Activated CD4-positive, alpha-beta memory T cell treated with anti-CD3 and anti-CD28 coated beads for 36 hours (primary cell): ENCODE measurements at regions of chr6 and their contacts with region 1.

Region 1: GRCh38 chr6:90008908-90009501 is 114.7 kb downstream of the GJA10 start:
- DNase-seq: peak; percentile 54
- H3K4me3 Mint-ChIP-seq: peak overlapping the region; percentile 12
- H3K27ac Mint-ChIP-seq: peak overlapping the region; percentile 94
- H3K4me1 Mint-ChIP-seq: peaks cover 48% of the 10 kb centered on the region
- H3K27me3 Mint-ChIP-seq: no peaks in the 10 kb centered on the region

Region 2: GRCh38 chr6:89952686-89953085 is 56.3 kb before region 1 on chr6:
- CTCF ChIA-PET with region 1: no interaction called
- POLR2A ChIA-PET with region 1: interaction called, 3 read pairs
- intact Hi-C with region 1: loop called (anchors 1 kb)
- DNase-seq: peak; percentile 72
- H3K4me3 Mint-ChIP-seq: peak overlapping the region; percentile 8
- H3K27ac Mint-ChIP-seq: peak overlapping the region; percentile 69
- H3K4me1 Mint-ChIP-seq: peaks cover 68% of the 10 kb centered on the region
- H3K27me3 Mint-ChIP-seq: no peaks in the 10 kb centered on the region

Region 3: GRCh38 chr6:89985751-89986493 is 23.1 kb before region 1 on chr6:
- CTCF ChIA-PET with region 1: interaction called, 3 read pairs
- POLR2A ChIA-PET with region 1: no interaction called
- intact Hi-C with region 1: loop called (anchors 2 kb)
- DNase-seq: no peak
- H3K4me3 Mint-ChIP-seq: no peak overlapping the region
- H3K27ac Mint-ChIP-seq: peak overlapping the region; percentile 29
- H3K4me1 Mint-ChIP-seq: peaks cover 70% of the 10 kb centered on the region
- H3K27me3 Mint-ChIP-seq: no peaks in the 10 kb centered on the region

Region 4: DNA sequence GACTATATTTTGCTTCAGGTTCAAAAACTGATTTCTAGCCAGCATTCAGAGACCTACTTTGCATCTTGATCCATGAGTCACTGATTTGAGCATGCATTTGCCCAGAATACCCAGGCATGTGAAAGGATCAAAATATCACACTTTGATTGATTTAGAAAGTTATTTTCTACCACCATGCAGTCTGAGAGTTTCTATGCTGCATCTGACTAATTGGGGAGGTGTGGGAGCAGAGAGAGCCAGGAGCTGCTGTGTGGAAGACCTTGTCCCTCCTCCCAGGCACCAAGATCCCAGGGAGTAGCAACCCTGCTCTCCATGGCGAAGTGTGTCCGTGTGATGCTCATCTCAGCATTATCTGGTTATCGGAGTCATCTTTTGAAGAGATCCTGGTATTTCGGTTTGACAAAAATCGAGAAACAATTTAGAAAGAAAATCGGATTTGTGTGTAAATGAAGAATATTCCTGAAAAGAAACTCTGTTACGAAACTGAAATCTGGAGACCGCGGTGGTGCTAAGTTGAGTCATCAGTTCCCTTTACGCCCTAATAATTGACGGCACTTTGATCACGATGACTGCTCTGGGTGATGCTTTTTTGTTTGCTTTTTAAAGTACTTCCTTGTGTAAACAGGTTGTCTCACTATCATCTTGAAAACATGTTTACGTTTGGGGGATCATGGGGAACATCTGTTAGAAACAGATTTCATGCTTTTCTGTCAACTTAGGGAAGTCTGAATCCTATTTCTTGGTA is 94.2 kb after region 1 on chr6:
- CTCF ChIA-PET with region 1: no interaction called
- POLR2A ChIA-PET with region 1: no interaction called
- intact Hi-C with region 1: loop called (anchors 1 kb)
- DNase-seq: peak; percentile 66
- H3K4me3 Mint-ChIP-seq: peak overlapping the region; percentile 39
- H3K27ac Mint-ChIP-seq: peak overlapping the region; percentile 63
- H3K4me1 Mint-ChIP-seq: peaks cover 67% of the 10 kb centered on the region
- H3K27me3 Mint-ChIP-seq: peaks cover 5% of the 10 kb centered on the region

Region 5: GRCh38 chr6:90179190-90180169 is 170.5 kb after region 1 on chr6:
- CTCF ChIA-PET with region 1: no interaction called
- POLR2A ChIA-PET with region 1: no interaction called
- intact Hi-C with region 1: loop called (anchors 1 kb)
- DNase-seq: no peak
- H3K4me3 Mint-ChIP-seq: no peak overlapping the region
- H3K27ac Mint-ChIP-seq: no peak overlapping the region
- H3K4me1 Mint-ChIP-seq: peaks cover 59% of the 10 kb centered on the region
- H3K27me3 Mint-ChIP-seq: peaks cover 3% of the 10 kb centered on the region